ENCODE measurements at regions of chr17 and their contacts with region 1.

Region 1: GRCh38 chr17:75289115-75289831 is at the start of gene SLC25A19:
- DNase-seq: peak; percentile 99
- H3K4me3 Mint-ChIP-seq: peak within 1 kb of the TSS; percentile 99
- H3K27ac Mint-ChIP-seq: peak within 1 kb of the TSS; percentile 100
- H3K4me1 Mint-ChIP-seq: peaks cover 26% of the 10 kb centered on the region
- H3K27me3 Mint-ChIP-seq: no peaks in the 10 kb centered on the region
- total RNA-seq, gene SLC25A19: 47.5 to 48.4 TPM

Region 2: GRCh38 chr17:75209061-75209460 is 80.2 kb before region 1 on chr17:
- CTCF ChIA-PET with region 1: no interaction called
- intact Hi-C with region 1: no loop called
- DNase-seq: no peak
- H3K4me3 Mint-ChIP-seq: no peak overlapping the region
- H3K27ac Mint-ChIP-seq: no peak overlapping the region
- H3K4me1 Mint-ChIP-seq: peaks cover 18% of the 10 kb centered on the region
- H3K27me3 Mint-ChIP-seq: no peaks in the 10 kb centered on the region

Region 3: DNA sequence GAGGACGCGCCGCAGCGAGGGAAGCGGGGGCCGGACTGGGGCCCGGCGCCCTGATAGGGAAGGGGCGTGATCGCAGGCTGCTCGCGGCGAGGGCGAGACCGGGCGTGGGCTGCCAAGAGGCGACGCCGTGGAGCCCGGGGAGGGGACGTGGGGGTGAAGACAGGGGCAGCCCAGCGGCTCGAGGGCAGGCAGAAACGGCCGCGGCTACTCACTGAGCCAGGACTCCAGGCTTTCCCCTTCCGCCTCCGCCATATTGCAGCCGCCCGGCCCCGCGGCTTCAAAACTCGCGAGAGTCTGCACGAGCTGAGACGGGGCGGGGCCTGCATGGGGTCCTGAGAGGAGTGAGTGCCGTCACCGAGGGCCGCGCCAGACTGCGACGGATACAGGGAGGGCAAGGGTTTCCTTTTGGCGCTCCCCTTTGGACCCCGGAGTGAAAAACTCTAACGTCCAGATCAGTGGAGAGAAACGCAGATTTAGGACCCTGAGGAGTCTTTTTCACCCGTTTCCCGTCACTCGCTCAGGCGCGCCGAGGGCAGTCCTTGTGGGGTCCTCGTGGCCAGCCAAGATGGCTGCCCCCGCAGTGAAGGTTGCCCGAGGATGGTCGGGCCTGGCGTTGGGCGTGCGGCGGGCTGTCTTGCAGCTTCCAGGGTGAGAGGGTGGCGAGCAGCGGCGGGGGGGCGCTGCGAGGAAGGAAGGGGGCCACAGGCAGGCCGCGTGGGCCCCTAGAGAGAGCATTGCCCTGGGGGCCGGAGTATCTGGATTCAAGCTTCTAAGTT is 27.7 kb before region 1 on chr17 and contains the starts of genes GGA3 and MRPS7:
- CTCF ChIA-PET with region 1: interaction called, 5 read pairs
- intact Hi-C with region 1: loop called (anchors 1 kb)
- DNase-seq: peak; percentile 98
- H3K4me3 Mint-ChIP-seq: peak within 1 kb of the TSS; percentile 93
- H3K27ac Mint-ChIP-seq: peak within 1 kb of the TSS; percentile 99
- H3K4me1 Mint-ChIP-seq: peaks cover 53% of the 10 kb centered on the region
- H3K27me3 Mint-ChIP-seq: no peaks in the 10 kb centered on the region
- total RNA-seq, gene GGA3: 65.7 to 66.1 TPM
- total RNA-seq, gene MRPS7: 73.3 to 78.3 TPM

Region 4: DNA sequence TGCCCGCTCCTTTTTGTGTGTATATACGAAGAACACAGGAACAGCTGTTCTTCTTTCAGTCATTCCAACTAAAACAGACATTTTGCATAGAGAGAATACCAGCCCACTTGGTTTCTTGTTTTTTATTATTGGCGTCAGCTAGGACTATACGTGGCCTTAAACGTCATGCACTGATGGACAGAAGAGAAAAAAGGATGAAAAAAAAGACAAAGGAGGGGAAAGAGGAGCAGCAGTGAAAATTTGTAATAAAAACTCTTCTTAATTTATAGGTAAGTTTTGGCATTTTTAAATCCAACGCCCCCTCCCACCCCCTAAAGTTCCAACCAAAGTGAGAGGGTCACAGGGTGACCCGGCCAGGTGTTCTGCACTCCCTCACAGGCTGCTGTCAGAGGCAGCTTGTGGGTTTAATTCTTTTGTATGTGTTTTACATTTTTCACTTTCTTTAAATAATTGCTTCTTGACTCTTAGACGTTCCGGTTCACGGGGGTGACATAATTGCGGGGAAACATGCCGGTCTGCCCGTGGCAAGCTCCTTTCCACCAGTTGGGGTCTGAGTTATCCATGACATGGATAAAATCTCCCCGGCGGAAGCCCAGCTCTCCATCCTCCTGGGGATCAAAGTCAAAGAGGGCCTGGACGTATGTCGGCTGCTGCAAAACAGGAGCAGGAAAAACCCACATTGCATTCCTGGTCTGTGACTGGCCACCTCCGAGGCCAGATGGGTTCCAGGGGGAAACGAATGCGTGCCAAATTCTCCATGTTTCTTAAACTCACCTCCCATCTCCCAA is 30.8 kb after region 1 on chr17:
- CTCF ChIA-PET with region 1: interaction called, 20 read pairs
- intact Hi-C with region 1: loop called (anchors 1 kb)
- DNase-seq: no peak
- H3K4me3 Mint-ChIP-seq: no peak overlapping the region
- H3K27ac Mint-ChIP-seq: peak overlapping the region; percentile 43
- H3K4me1 Mint-ChIP-seq: peaks cover 23% of the 10 kb centered on the region
- H3K27me3 Mint-ChIP-seq: no peaks in the 10 kb centered on the region

Region 5: DNA sequence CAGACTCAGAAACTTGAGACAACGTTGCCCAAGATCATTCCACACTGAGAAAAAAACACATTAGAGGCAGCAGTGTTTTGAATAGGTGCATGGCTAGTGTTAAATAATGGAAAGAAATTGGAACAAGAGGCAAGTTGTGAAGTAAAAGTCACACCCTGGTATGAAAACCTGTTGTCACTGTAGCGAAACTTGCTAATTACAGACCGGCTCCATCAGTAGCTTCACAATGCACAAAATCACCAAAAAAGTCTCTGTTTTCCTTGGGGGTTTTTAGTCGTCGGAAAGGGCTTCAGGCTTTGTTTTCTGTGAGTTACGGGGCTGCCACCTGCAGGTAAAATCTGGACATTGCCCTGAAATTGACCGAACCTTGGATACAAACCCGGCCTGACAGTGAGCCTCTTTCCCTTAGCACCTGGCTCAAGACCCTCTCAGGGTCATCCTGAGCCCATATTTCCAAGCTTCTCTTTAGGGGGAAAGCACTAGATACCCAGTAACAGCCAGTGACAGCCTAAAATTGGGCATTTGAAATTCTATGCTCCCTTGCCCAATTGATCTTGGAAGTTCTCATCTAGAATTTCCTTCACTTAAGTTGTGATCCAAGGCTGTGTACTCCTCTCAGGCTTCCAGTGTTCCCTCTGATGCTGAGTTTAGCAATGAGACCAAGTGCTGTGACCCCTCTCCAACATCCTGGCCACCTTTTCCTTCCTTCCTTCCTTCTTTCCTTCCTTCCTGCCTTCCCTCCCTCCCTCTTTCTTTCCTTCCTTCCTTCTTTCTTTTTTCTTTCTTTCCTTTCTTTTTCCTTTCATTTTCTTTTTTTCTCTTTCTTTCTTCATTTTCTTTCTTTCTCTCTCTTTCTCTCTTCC is 123.4 kb after region 1 on chr17:
- CTCF ChIA-PET with region 1: interaction called, 18 read pairs
- intact Hi-C with region 1: no loop called
- DNase-seq: peak; percentile 87
- H3K4me3 Mint-ChIP-seq: peak overlapping the region; percentile 37
- H3K27ac Mint-ChIP-seq: no peak overlapping the region
- H3K4me1 Mint-ChIP-seq: peaks cover 18% of the 10 kb centered on the region
- H3K27me3 Mint-ChIP-seq: no peaks in the 10 kb centered on the region

Region 6: DNA sequence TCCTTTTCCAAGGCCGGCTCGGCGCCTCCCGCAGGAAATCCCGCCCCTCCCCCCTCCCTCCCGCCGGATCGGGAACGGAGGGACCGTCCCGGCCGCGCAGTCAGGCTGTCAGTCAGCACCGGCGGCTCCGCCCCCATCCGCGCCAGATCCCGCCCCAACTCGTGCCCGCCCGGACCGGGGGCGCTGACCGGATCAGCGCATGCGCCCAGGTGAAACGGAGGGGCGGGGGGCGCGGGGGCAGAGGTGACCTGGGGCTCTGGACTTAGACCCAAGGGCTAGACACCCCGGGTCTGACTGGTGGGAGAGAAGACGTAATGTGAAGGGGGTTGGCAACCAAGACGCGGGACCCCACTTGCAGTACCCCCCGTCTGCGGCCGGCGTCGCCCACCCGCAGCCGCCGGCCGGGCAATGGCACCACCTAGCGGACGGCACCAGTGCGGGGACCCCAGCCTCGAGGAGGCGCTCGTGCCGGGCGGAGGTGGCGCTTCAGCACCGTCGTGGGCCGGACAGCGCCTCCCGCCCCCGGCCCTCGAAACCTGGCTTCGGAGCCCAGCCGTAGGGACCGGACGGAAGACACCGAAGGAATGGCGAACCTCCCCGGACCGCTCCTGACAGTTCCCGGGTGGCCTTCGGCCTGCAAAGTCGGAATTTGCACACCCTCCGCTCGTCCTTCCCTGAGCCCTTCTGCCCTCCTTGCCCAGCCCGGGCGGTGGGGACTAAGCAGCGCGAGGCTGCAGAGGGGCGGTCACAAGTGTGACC is 226.4 kb after region 1 on chr17 and contains the start of gene CASKIN2:
- CTCF ChIA-PET with region 1: interaction called, 3 read pairs
- intact Hi-C with region 1: loop called (anchors 2 kb)
- DNase-seq: peak; percentile 90
- H3K4me3 Mint-ChIP-seq: peak within 1 kb of the TSS; percentile 62
- H3K27ac Mint-ChIP-seq: no peak within 1 kb of the TSS
- H3K4me1 Mint-ChIP-seq: peaks cover 23% of the 10 kb centered on the region
- H3K27me3 Mint-ChIP-seq: no peaks in the 10 kb centered on the region
- total RNA-seq, gene CASKIN2: 1.0 to 1.1 TPM

Region 7: GRCh38 chr17:75589012-75589918 is 300.0 kb after region 1 on chr17:
- CTCF ChIA-PET with region 1: no interaction called
- intact Hi-C with region 1: loop called (anchors 5 kb)
- DNase-seq: peak; percentile 98
- H3K4me3 Mint-ChIP-seq: peak overlapping the region; percentile 76
- H3K27ac Mint-ChIP-seq: no peak overlapping the region
- H3K4me1 Mint-ChIP-seq: peaks cover 2% of the 10 kb centered on the region
- H3K27me3 Mint-ChIP-seq: peaks cover 2% of the 10 kb centered on the region

Region 8: GRCh38 chr17:75784473-75785015 is 495.3 kb after region 1 on chr17 and contains the start of gene UNK:
- CTCF ChIA-PET with region 1: no interaction called
- intact Hi-C with region 1: loop called (anchors 1 kb)
- DNase-seq: peak; percentile 98
- H3K4me3 Mint-ChIP-seq: peak within 1 kb of the TSS; percentile 90
- H3K27ac Mint-ChIP-seq: peak within 1 kb of the TSS; percentile 100
- H3K4me1 Mint-ChIP-seq: peaks cover 51% of the 10 kb centered on the region
- H3K27me3 Mint-ChIP-seq: peaks cover 2% of the 10 kb centered on the region
- total RNA-seq, gene UNK: 19.1 to 21.4 TPM